ENCODE measurements at regions of chr19 and their contacts with region 1.

Region 1: GRCh38 chr19:19776041-19777008 is 43.4 kb upstream of the ZNF14 start:
- DNase-seq: peak; percentile 79 to 95 (median 91)
- ATAC-seq: peak; percentile 100
- H3K4me3 ChIP-seq: peak overlapping the region; percentile 91
- H3K4me3 Mint-ChIP-seq: peak overlapping the region; percentile 91 to 100 (median 98)
- H3K27ac ChIP-seq: peak overlapping the region; percentile 84
- H3K27ac Mint-ChIP-seq: peak overlapping the region; percentile 88 to 99 (median 97)
- H3K4me1 ChIP-seq: peaks cover 11 to 20% of the 10 kb centered on the region in 2 donors
- H3K4me1 Mint-ChIP-seq: peaks cover 25 to 67% (median 54%) of the 10 kb centered on the region in 7 donors
- H3K27me3 ChIP-seq: no peaks in the 10 kb centered on the region
- H3K27me3 Mint-ChIP-seq: no peaks in the 10 kb centered on the region

Region 2: GRCh38 chr19:19320362-19321142 is 455.8 kb before region 1 on chr19 and contains the starts of genes MAU2 and SUGP1:
- CTCF ChIA-PET with region 1: no interaction called
- POLR2A ChIA-PET with region 1: no interaction called
- intact Hi-C with region 1: loop called in 1 of 2 experiments (anchors 1 kb)
- DNase-seq: peak; percentile 78 to 94 (median 91)
- ATAC-seq: peak; percentile 94
- H3K4me3 ChIP-seq: peak within 1 kb of the TSS; percentile 89
- H3K4me3 Mint-ChIP-seq: peak within 1 kb of the TSS; percentile 93 to 100 (median 98)
- H3K27ac ChIP-seq: peak within 1 kb of the TSS; percentile 95
- H3K27ac Mint-ChIP-seq: peak within 1 kb of the TSS; percentile 96 to 100 (median 99)
- H3K4me1 ChIP-seq: peaks cover 23 to 30% of the 10 kb centered on the region in 2 donors
- H3K4me1 Mint-ChIP-seq: peaks cover 20 to 66% (median 44%) of the 10 kb centered on the region in 7 donors
- H3K27me3 ChIP-seq: no peaks in the 10 kb centered on the region
- H3K27me3 Mint-ChIP-seq: no peaks in the 10 kb centered on the region
- total RNA-seq, gene MAU2: 93.7 to 170 (median 136) TPM
- total RNA-seq, gene SUGP1: 59.7 to 96.6 (median 77.5) TPM

Region 3: DNA sequence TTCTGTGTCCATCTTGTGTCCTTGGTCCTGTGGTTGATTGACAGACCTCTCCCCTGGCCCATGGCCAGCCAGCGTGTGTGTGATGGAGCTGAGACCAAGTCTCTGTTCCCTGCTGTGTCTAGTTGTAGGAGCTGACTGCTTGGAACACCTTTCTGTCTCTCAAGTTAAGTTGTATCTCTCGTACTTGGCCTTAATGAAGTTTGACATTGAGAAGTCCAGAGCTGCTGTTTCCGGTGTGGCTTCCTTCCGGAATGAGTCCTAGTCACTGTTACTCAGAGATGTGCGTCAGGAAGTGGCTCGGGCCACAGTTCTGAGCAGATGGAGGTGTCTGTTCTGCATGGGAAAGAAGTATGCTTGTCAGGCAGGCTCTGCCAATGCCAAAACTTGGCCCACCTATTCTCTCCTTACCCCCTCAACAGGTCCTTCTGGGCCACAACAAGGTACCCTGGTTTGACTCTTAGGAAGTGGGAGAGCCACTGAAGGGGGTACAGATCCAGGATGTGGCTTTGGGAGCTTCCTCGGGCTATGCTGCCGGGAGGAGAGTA is 316.5 kb before region 1 on chr19:
- CTCF ChIA-PET with region 1: no interaction called
- POLR2A ChIA-PET with region 1: no interaction called
- intact Hi-C with region 1: no loop called
- DNase-seq: peak in 8 of 9 donors; percentile 49 to 75 (median 61)
- ATAC-seq: peak; percentile 72
- H3K4me3 ChIP-seq: peak overlapping the region; percentile 55
- H3K4me3 Mint-ChIP-seq: peak overlapping the region; percentile 85 to 92 (median 91)
- H3K27ac ChIP-seq: peak overlapping the region; percentile 82
- H3K27ac Mint-ChIP-seq: peak overlapping the region; percentile 94 to 99 (median 98)
- H3K4me1 ChIP-seq: peaks cover 82% of the 10 kb centered on the region in 2 donors
- H3K4me1 Mint-ChIP-seq: peaks cover 63 to 84% (median 72%) of the 10 kb centered on the region in 7 donors
- H3K27me3 ChIP-seq: no peaks in the 10 kb centered on the region
- H3K27me3 Mint-ChIP-seq: no peaks in the 10 kb centered on the region

Region 4: DNA sequence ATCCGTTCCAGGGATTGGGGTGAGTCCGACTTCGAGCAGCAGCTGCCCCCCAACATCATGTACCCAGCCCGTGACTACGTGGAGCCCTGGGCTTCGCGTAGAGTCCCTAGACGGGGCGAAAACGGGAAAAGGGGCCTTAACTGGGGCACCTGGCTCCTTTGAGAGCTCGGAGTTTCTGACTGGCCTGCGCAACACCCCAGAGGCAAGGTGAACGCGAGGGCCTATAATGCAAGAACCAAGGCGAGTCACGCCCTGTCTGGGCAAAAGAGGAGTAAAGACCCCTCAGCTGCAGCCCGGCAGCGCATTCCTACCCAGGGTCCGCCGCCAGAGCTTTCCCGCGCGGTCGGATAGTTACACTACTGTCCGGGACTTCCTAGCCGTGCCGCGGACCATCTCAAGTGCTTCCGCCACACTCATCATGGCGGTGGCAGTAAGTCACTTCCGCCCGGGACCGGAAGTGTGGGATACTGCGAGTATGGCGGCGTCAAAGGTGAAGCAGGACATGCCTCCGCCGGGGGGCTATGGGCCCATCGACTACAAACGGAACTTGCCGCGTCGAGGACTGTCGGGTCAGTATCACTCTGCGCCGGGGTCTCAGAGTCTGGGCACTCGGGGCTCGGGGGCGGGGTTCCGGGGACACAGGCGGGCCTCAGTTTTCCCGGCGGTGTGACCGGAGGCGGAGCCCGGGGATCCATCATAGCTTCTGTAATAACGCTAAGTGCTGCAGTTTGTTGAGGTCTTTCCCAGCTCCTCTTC is 260.4 kb before region 1 on chr19 and contains the start of gene NDUFA13:
- CTCF ChIA-PET with region 1: no interaction called
- POLR2A ChIA-PET with region 1: no interaction called
- intact Hi-C with region 1: loop called in 1 of 2 experiments (anchors 1 kb)
- DNase-seq: peak; percentile 88 to 98 (median 92)
- ATAC-seq: peak; percentile 96
- H3K4me3 ChIP-seq: peak within 1 kb of the TSS; percentile 96
- H3K4me3 Mint-ChIP-seq: peak within 1 kb of the TSS; percentile 89 to 98 (median 95)
- H3K27ac ChIP-seq: peak within 1 kb of the TSS; percentile 83
- H3K27ac Mint-ChIP-seq: peak within 1 kb of the TSS; percentile 89 to 98 (median 96)
- H3K4me1 ChIP-seq: peaks cover 13 to 14% of the 10 kb centered on the region in 2 donors
- H3K4me1 Mint-ChIP-seq: peaks cover 16 to 42% (median 27%) of the 10 kb centered on the region in 7 donors
- H3K27me3 ChIP-seq: no peaks in the 10 kb centered on the region
- H3K27me3 Mint-ChIP-seq: no peaks in the 10 kb centered on the region
- total RNA-seq, gene NDUFA13: 172 to 362 (median 176) TPM

Region 5: DNA sequence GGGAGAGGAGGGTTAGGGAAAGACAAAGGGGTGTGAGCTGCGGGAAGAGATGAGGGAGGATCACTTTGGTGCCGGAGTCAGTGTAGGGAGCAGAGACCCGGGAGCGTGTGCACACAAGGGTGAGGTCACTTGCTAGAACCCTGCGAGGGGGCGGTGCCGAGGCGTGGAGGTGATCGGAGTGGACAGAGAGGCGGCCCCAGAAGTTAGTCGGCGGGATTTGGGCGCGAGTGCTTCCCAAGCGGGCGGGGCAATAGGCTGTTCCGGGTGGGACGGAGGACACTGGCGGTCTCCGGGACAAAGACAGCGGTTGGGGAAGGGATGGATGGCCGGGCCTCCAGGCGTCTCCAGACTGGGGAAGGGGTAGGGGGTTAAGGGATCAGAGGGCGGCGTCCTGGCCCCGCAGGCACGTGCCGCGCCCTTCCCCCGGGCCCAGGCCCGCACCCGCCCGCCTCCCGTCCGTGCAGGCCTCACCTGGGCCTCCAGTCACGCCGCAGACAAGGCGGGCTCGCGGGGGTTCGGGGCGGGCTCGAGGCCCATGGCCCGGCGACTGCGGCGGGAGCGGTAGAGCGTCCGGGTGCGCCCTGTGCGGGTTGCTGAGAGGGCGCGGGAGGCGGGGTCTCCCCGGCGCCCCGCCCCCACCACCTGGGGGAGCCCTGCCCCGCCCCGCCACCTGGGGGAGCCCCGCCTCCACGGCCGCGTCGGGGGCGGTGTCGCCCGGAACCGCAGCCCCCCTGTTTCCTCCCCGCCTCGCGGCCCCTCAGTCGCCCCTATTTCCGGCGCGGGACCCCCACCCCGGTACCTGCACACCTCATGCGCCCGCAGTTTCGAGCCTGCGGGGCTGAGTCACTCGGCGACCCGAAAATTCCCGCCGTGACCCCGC is 148.5 kb before region 1 on chr19 and contains the start of gene LPAR2:
- CTCF ChIA-PET with region 1: no interaction called
- POLR2A ChIA-PET with region 1: interaction called, 4 read pairs
- intact Hi-C with region 1: loop called in 1 of 2 experiments (anchors 1 kb)
- DNase-seq: peak; percentile 73 to 90 (median 82)
- ATAC-seq: peak; percentile 95
- H3K4me3 ChIP-seq: peak within 1 kb of the TSS; percentile 79
- H3K4me3 Mint-ChIP-seq: peak within 1 kb of the TSS; percentile 91 to 100 (median 96)
- H3K27ac ChIP-seq: peak within 1 kb of the TSS; percentile 92
- H3K27ac Mint-ChIP-seq: peak within 1 kb of the TSS; percentile 86 to 98 (median 95)
- H3K4me1 ChIP-seq: peaks cover 6 to 18% of the 10 kb centered on the region in 2 donors
- H3K4me1 Mint-ChIP-seq: peaks cover 17 to 32% (median 27%) of the 10 kb centered on the region in 7 donors
- H3K27me3 ChIP-seq: no peaks in the 10 kb centered on the region
- H3K27me3 Mint-ChIP-seq: no peaks in the 10 kb centered on the region
- total RNA-seq, gene LPAR2: 64.4 to 91.7 (median 75.0) TPM

Region 6: GRCh38 chr19:19849056-19849455 is 72.7 kb after region 1 on chr19:
- CTCF ChIA-PET with region 1: no interaction called
- POLR2A ChIA-PET with region 1: no interaction called
- intact Hi-C with region 1: no loop called
- DNase-seq: no peak
- ATAC-seq: no peak
- H3K4me3 ChIP-seq: no peak overlapping the region
- H3K4me3 Mint-ChIP-seq: no peak overlapping the region
- H3K27ac ChIP-seq: no peak overlapping the region
- H3K27ac Mint-ChIP-seq: no peak overlapping the region
- H3K4me1 ChIP-seq: no peaks in the 10 kb centered on the region
- H3K4me1 Mint-ChIP-seq: no peaks in the 10 kb centered on the region
- H3K27me3 ChIP-seq: no peaks in the 10 kb centered on the region
- H3K27me3 Mint-ChIP-seq: no peaks in the 10 kb centered on the region

Region 7: DNA sequence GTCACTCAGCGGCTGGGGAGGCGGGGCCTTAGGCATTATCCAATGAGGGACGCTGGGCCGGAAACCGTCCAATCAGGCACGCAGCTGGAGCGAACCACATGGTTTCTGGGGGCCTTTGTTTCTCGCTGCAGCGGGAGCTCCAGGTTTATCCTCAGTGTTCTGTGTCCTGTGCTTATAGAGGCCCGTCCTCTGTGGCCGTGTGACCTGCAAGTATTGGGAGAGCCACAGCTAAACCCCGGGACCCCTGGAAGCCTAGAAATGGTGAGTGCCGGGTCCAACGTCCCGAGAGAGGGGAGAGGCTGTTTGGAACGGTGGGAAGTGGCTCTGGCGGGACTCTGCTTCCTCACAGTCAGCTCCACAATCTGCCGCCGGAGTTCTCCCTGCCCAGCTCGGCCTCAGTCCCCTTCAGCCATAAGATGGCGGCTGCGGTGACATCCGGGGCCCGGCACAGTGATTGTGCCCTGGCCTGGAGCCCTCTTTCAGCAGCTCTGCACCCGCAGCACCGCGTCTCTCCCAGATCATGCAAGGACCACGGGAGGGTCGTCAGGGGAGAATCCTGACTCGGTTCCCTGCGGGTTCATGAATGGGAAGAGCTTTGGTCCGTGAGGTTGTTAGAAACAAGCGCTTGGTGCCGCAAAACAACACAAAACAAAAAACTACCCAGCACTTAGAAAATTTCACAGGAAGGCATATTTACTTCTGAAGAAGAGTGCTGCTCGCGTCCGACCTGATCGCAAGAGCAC is 89.6 kb after region 1 on chr19 and contains the start of gene ZNF253:
- CTCF ChIA-PET with region 1: no interaction called
- POLR2A ChIA-PET with region 1: interaction called, 31 read pairs
- intact Hi-C with region 1: loop called (anchors 1 kb)
- DNase-seq: peak; percentile 76 to 95 (median 92)
- ATAC-seq: peak; percentile 95
- H3K4me3 ChIP-seq: peak within 1 kb of the TSS; percentile 93
- H3K4me3 Mint-ChIP-seq: peak within 1 kb of the TSS; percentile 98 to 100 (median 100)
- H3K27ac ChIP-seq: peak within 1 kb of the TSS; percentile 86
- H3K27ac Mint-ChIP-seq: peak within 1 kb of the TSS; percentile 96 to 100 (median 99)
- H3K4me1 ChIP-seq: peaks cover 7 to 13% of the 10 kb centered on the region in 2 donors
- H3K4me1 Mint-ChIP-seq: peaks cover 21 to 41% (median 31%) of the 10 kb centered on the region in 7 donors
- H3K27me3 ChIP-seq: no peaks in the 10 kb centered on the region
- H3K27me3 Mint-ChIP-seq: no peaks in the 10 kb centered on the region
- total RNA-seq, gene ZNF253: 9.5 to 33.8 (median 14.8) TPM

Region 8: GRCh38 chr19:20077791-20078463 is 301.6 kb after region 1 on chr19 and contains the start of gene ZNF90:
- CTCF ChIA-PET with region 1: no interaction called
- POLR2A ChIA-PET with region 1: no interaction called
- intact Hi-C with region 1: loop called in 1 of 2 experiments (anchors 5 kb)
- DNase-seq: peak; percentile 57 to 90 (median 84)
- ATAC-seq: peak; percentile 99
- H3K4me3 ChIP-seq: peak within 1 kb of the TSS; percentile 86
- H3K4me3 Mint-ChIP-seq: peak within 1 kb of the TSS; percentile 86 to 89 (median 88)
- H3K27ac ChIP-seq: no peak within 1 kb of the TSS
- H3K27ac Mint-ChIP-seq: peak within 1 kb of the TSS; percentile 31 to 82 (median 54)
- H3K4me1 ChIP-seq: peaks cover 4 to 8% of the 10 kb centered on the region in 2 donors
- H3K4me1 Mint-ChIP-seq: peaks cover 0 to 27% (median 14%) of the 10 kb centered on the region in 7 donors
- H3K27me3 ChIP-seq: no peaks in the 10 kb centered on the region
- H3K27me3 Mint-ChIP-seq: no peaks in the 10 kb centered on the region
- total RNA-seq, gene ZNF90: 3.4 to 7.7 (median 4.5) TPM